Heart left ventricle (tissue), 16 donors: ENCODE measurements at regions of chr7 and their contacts with region 1.

Region 1: GRCh38 chr7:149704507-149704906 is 68.9 kb downstream of the ZNF467 start:
- DNase-seq: no peak
- ATAC-seq: no peak
- H3K4me3 ChIP-seq: no peak overlapping the region
- H3K27ac ChIP-seq: no peak overlapping the region
- H3K4me1 ChIP-seq: no peaks in the 10 kb centered on the region
- H3K27me3 ChIP-seq: no peaks in the 10 kb centered on the region
- CTCF ChIP-seq: no peak
- POLR2A ChIP-seq: no peak

Region 2: GRCh38 chr7:149637911-149638565 is 66.5 kb before region 1 on chr7:
- intact Hi-C with region 1: loop called in 1 of 10 experiments (anchors 2 kb)
- DNase-seq: no peak
- ATAC-seq: no peak
- H3K4me3 ChIP-seq: no peak overlapping the region
- H3K27ac ChIP-seq: no peak overlapping the region
- H3K4me1 ChIP-seq: no peaks in the 10 kb centered on the region
- H3K27me3 ChIP-seq: peaks cover 0 to 10% (median 0%) of the 10 kb centered on the region in 9 donors
- CTCF ChIP-seq: no peak
- POLR2A ChIP-seq: no peak

Region 3: GRCh38 chr7:149669121-149669818 is 35.2 kb before region 1 on chr7:
- intact Hi-C with region 1: loop called in 1 of 10 experiments (anchors 5 kb)
- DNase-seq: no peak
- ATAC-seq: no peak
- H3K4me3 ChIP-seq: no peak overlapping the region
- H3K27ac ChIP-seq: no peak overlapping the region
- H3K4me1 ChIP-seq: peaks cover 0 to 14% (median 5%) of the 10 kb centered on the region in 12 donors
- H3K27me3 ChIP-seq: peaks cover 0 to 5% (median 0%) of the 10 kb centered on the region in 9 donors
- CTCF ChIP-seq: peak in 10 of 12 donors; percentile 2 to 55 (median 36)
- POLR2A ChIP-seq: no peak